A549 (cell line): ENCODE measurements at regions of chr15 and their contacts with region 1.

Region 1: GRCh38 chr15:58269455-58270414 is 131.6 kb downstream of the AQP9 start:
- DNase-seq: peak; percentile 53 to 71
- ATAC-seq: peak; percentile 73 to 96; a peak in 5 of 6 replicates
- H3K4me3 ChIP-seq: no peak overlapping the region
- H3K27ac ChIP-seq: peak overlapping the region; percentile 36 to 72; a peak in 4 of 6 replicates
- H3K4me1 ChIP-seq: no peaks in the 10 kb centered on the region
- CTCF ChIP-seq: peak; percentile 72
- EP300 ChIP-seq: no peak
- POLR2A ChIP-seq: no peak
- RAD21 ChIP-seq: peak; percentile 90 to 94

Region 2: GRCh38 chr15:58043192-58043903 is 226.4 kb before region 1 on chr15:
- CTCF ChIA-PET with region 1: no interaction called
- POLR2A ChIA-PET with region 1: no interaction called
- DNase-seq: peak; percentile 28 to 49
- ATAC-seq: peak; percentile 82 to 89; a peak in 5 of 6 replicates
- H3K4me3 ChIP-seq: no peak overlapping the region
- H3K27ac ChIP-seq: no peak overlapping the region
- H3K4me1 ChIP-seq: no peaks in the 10 kb centered on the region
- CTCF ChIP-seq: peak; percentile 81
- EP300 ChIP-seq: no peak
- POLR2A ChIP-seq: no peak
- RAD21 ChIP-seq: peak; percentile 40 to 48; a peak in 3 of 5 replicates

Region 3: DNA sequence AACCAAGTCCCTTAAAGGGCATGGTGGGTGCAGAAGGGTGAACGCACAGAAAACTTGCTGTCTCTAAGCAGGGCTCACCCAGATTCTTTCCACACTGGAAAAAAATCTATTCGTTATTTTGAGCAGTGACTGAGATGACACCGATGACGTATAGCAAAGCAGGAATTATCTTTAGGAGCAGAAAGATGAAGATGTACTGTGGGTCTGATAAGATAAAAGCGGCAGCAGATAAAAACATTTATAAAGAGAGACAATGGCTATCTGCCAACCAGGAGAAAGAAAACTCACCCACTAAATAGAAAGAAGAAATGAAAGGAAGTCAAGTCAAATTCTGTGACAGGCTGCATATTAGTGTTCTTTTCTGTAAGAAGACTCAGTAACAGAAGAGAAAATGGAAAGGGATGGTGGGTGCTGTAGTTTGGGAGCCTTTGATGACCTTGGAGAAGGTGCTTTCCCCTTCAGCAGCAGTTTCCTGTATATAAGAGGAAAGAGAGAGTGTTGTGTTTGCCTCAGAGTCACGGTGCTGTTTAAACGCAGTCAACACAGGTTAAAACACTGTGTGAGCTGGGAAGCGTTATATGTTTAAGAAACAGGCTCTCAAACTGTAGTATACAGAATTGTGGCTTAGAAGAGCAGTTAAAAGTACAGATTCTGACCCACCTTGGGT is 20.0 kb before region 1 on chr15:
- CTCF ChIA-PET with region 1: interaction called, 20 read pairs
- POLR2A ChIA-PET with region 1: no interaction called
- DNase-seq: no peak
- ATAC-seq: no peak
- H3K4me3 ChIP-seq: no peak overlapping the region
- H3K27ac ChIP-seq: no peak overlapping the region
- H3K4me1 ChIP-seq: no peaks in the 10 kb centered on the region
- CTCF ChIP-seq: no peak
- EP300 ChIP-seq: no peak
- POLR2A ChIP-seq: no peak
- RAD21 ChIP-seq: no peak